Sigmoid colon (tissue), 7 donors: ENCODE measurements at regions of chr20 and their contacts with region 1.

Region 1: DNA sequence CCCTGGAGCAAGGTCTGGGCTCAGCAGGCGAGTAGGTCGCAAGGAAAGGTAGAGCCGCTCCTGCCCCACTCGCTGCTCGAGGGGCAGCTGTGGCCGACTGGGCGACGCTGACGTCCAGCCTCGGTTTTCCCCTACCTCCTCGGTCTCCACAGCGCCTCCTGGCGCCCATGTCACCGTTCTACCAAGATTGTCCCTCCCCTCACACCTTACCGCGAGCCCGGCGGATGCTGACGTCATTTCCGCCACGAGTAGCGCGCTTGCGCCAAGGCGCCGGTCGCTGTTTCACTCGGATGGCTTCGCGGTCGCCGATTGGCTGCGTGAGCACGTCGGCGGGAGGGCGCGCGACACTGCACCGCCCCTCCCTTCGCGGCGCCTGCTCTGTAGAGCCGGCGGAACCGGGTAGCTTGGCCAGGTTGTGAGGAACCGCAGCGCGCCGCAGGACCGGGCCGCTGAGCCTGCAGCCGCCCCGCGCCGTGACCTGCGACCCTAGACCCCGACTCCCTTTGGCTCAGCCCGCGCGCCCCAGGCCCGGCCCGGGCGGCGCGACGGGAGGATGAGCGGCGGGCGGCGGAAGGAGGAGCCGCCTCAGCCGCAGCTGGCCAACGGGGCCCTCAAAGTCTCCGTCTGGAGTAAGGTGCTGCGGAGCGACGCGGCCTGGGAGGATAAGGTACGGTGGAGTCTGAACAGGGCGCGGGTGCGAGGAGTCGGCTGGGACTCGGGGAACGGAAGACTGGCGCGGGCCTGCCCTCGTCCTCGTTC is at the start of gene RAB5IF:
- DNase-seq: peak; percentile 99
- H3K4me3 ChIP-seq: peak within 1 kb of the TSS; percentile 70 to 100 (median 86)
- H3K27ac ChIP-seq: peak within 1 kb of the TSS; percentile 87 to 96 (median 90)
- H3K4me1 ChIP-seq: peaks cover 0 to 29% (median 25%) of the 10 kb centered on the region in 4 donors
- H3K27me3 ChIP-seq: no peaks in the 10 kb centered on the region
- CTCF ChIP-seq: peak; percentile 76 to 98 (median 94)
- EP300 ChIP-seq: peak in 2 of 4 donors; percentile 33 to 86
- POLR2A ChIP-seq: peak; percentile 18 to 25
- total RNA-seq, gene RAB5IF: 58.7 to 85.1 (median 75.7) TPM

Region 2: GRCh38 chr20:36460648-36461599 is 144.7 kb before region 1 on chr20:
- intact Hi-C with region 1: loop called (anchors 2 kb)
- DNase-seq: peak; percentile 96
- H3K4me3 ChIP-seq: peak overlapping the region; percentile 65 to 88 (median 81)
- H3K27ac ChIP-seq: peak overlapping the region; percentile 93 to 99 (median 98)
- H3K4me1 ChIP-seq: peaks cover 0 to 43% (median 38%) of the 10 kb centered on the region in 4 donors
- H3K27me3 ChIP-seq: no peaks in the 10 kb centered on the region
- CTCF ChIP-seq: no peak
- EP300 ChIP-seq: peak in 1 of 4 donors; percentile 23
- POLR2A ChIP-seq: peak; percentile 23 to 28

Region 3: DNA sequence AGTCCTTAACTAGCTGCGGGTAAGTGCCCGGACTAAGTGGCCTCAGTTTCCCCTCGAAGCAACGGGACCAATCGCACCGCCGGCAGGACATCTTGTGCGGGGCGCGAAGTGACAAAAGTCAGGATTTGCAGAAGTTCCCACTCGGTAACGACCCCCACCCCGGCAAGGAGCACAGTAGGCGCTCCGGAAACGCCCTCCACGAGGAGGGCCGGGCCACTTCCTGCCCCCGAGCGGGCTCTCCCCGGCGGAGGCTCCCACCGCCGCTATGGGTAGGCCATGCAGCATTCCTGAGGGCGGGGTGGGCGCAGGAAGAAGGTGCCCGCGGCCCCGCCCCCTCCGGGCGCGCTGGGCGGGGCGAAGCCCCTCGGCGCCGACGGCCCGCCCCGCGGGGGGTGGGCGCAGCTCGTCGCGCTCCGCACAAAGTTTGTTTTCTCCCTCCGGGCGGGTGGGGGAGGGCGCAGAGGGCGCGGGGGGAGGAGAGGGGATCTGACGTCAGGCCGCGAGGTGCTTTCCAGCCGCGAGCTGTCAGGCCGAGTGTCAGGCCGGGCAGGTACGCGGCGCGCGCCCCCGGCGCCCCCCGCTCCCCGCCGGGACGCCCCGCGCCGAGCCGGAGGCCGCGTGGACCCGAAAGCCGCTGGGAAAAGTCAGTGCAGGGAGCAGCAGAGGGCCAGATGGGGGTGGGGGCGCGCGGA is 32.3 kb before region 1 on chr20 and contains the start of gene TGIF2:
- intact Hi-C with region 1: loop called (anchors 2 kb)
- DNase-seq: peak; percentile 92
- H3K4me3 ChIP-seq: peak within 1 kb of the TSS; percentile 82 to 87 (median 84)
- H3K27ac ChIP-seq: peak within 1 kb of the TSS; percentile 88 to 94 (median 91)
- H3K4me1 ChIP-seq: peaks cover 0 to 40% (median 29%) of the 10 kb centered on the region in 4 donors
- H3K27me3 ChIP-seq: no peaks in the 10 kb centered on the region
- CTCF ChIP-seq: no peak
- EP300 ChIP-seq: no peak
- POLR2A ChIP-seq: no peak
- total RNA-seq, gene TGIF2: 8.9 to 13.6 (median 11.1) TPM

Region 4: GRCh38 chr20:36773597-36774390 is 168.2 kb after region 1 on chr20 and contains the start of gene DSN1:
- intact Hi-C with region 1: loop called (anchors 5 kb)
- DNase-seq: peak; percentile 99
- H3K4me3 ChIP-seq: peak within 1 kb of the TSS; percentile 58 to 79 (median 73)
- H3K27ac ChIP-seq: peak within 1 kb of the TSS; percentile 93 to 97 (median 95)
- H3K4me1 ChIP-seq: peaks cover 0 to 34% (median 26%) of the 10 kb centered on the region in 4 donors
- H3K27me3 ChIP-seq: no peaks in the 10 kb centered on the region
- CTCF ChIP-seq: peak in 1 of 4 experiments; percentile 51
- EP300 ChIP-seq: no peak
- POLR2A ChIP-seq: peak; percentile 28 to 77
- total RNA-seq, gene DSN1: 4.4 to 6.4 (median 5.5) TPM